ENCODE measurements at regions of chr15 and their contacts with region 1.

Region 1: DNA sequence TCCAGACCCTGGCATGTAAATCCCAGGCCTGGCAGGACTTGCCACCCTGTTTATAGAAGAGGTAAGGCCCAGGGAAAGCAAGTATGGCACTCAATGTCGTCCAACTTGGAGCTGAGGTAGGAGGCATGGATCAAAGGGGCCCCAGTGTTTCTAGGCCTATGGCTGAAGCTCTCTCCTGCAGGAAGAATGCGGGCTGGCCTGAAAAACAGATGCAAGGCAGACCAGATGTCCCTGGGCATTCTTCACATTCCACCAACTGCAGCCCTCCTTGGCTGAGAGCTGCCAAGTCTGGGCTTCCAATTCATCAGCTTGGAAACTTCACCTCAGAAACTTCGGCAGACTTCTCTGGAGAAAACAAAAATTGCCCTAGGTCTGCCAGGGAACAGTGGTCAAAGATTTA is 22.2 kb downstream of the MESD start:
- DNase-seq: peak; percentile 85
- H3K4me3 ChIP-seq: no peak overlapping the region
- CTCF ChIP-seq: no peak

Region 2: GRCh38 chr15:80609512-80609946 is 357.9 kb before region 1 on chr15:
- in situ Hi-C with region 1: loop called (anchors 10 kb)
- DNase-seq: no peak
- H3K4me3 ChIP-seq: no peak overlapping the region
- CTCF ChIP-seq: no peak

Region 3: DNA sequence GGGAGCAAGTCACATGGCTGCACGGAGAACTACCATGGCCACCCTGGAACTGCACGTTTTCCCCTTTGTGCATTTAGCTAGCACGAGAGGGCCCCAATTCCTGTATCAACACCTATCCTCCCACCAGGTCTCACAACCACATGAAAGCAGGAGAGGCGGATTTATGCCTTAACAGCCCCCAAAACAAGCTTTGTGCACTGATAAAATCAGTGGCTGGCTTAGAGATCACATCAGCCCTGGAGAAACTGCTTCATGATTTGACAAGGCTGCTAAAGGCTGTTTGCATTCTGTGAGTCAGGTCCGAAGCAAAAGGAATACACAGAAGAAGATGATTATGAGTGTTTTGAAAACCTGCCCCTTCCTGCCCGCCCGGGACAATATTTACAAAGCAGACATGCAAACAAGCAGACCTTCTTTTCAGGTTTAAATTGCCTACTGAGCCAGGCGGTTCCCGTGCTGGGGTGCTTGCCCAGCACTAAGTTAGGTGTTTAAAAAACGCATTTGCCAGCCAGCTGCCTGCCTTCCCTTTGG is 162.4 kb before region 1 on chr15:
- in situ Hi-C with region 1: loop called (anchors 5 kb)
- DNase-seq: no peak
- H3K4me3 ChIP-seq: no peak overlapping the region
- CTCF ChIP-seq: no peak

Region 4: DNA sequence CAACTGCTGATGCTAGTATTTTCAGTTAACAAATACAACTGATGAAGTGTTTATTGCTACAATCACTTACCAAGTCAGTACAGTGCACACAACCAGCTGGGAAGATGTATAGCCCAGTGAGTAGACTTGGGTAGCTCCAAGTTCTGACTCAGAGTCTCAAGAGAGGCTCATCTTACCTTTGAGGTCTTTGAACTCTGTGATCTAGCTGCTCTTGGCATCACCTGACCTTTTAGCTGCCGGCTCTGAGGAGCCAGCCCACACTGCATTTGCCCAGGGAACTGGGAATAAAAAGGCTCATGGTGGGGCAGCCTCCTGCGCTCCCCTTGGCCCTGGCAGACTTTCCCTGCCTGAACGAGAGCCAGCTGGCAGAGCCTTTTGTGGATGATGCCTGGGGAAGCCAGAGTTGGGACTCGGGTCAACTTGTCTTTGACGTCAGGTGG is 105.7 kb before region 1 on chr15:
- in situ Hi-C with region 1: loop called (anchors 10 kb)
- DNase-seq: no peak
- H3K4me3 ChIP-seq: no peak overlapping the region
- CTCF ChIP-seq: no peak

Region 5: DNA sequence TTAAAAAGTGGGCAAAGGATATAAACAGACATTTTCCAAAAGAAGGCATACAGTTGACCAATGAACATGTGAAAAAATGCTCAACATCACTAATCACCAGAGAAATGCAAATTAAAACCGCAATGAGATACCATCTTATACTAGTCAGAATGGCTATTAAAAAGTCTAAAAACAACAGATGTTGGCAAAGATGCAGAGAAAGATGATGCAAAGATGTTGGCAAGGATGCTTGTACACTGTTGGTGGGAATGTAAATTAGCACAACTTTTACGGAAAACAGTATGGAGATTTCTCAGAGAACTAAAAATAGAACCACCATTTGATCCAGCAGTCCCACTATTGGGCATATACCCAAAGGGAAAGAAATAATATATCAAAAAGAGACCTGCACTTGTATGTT is 86.8 kb after region 1 on chr15:
- in situ Hi-C with region 1: no loop called
- DNase-seq: peak; percentile 93
- H3K4me3 ChIP-seq: no peak overlapping the region
- CTCF ChIP-seq: no peak

Measured in astrocyte of the cerebellum (primary cell).